Left colon (tissue), 2 donors: ENCODE measurements at regions of chr1 and their contacts with region 1.

Region 1: GRCh38 chr1:117758444-117759316 is 152.8 kb downstream of the TENT5C start:
- DNase-seq: peak; percentile 68 to 77
- ATAC-seq: peak; percentile 91

Region 2: DNA sequence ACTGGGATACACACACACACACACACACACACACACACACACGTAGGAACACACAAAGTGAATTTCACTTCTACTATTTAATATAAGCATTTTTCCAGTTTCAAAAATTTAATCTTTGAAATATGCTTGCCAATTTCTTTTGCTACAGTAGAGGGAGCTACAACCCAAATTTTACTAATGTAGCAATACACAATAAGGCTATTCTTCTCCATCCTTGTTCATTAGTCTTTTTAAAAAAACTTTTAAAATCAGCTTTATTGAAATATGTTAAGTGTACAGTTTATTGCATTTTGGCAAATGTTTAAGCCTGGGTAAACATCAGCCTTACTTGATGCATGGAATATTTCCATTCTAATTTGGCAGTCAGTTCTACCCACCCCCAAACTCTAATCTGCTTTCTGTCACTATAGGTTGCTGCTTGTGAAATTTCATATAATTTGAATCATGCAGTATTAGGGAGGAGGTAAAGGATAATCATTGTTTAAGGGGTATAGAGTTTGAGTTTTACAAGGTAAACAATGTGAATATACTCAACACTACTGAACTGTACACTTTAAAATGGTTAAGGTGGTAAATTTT is 245.8 kb before region 1 on chr1:
- intact Hi-C with region 1: loop called in 1 of 2 experiments (anchors 5 kb)
- DNase-seq: no peak
- ATAC-seq: peak; percentile 54

Region 3: GRCh38 chr1:117534995-117535467 is 223.6 kb before region 1 on chr1:
- intact Hi-C with region 1: loop called (anchors 5 to 10 kb)
- DNase-seq: peak in 1 of 2 donors; percentile 23
- ATAC-seq: peak; percentile 79

Region 4: DNA sequence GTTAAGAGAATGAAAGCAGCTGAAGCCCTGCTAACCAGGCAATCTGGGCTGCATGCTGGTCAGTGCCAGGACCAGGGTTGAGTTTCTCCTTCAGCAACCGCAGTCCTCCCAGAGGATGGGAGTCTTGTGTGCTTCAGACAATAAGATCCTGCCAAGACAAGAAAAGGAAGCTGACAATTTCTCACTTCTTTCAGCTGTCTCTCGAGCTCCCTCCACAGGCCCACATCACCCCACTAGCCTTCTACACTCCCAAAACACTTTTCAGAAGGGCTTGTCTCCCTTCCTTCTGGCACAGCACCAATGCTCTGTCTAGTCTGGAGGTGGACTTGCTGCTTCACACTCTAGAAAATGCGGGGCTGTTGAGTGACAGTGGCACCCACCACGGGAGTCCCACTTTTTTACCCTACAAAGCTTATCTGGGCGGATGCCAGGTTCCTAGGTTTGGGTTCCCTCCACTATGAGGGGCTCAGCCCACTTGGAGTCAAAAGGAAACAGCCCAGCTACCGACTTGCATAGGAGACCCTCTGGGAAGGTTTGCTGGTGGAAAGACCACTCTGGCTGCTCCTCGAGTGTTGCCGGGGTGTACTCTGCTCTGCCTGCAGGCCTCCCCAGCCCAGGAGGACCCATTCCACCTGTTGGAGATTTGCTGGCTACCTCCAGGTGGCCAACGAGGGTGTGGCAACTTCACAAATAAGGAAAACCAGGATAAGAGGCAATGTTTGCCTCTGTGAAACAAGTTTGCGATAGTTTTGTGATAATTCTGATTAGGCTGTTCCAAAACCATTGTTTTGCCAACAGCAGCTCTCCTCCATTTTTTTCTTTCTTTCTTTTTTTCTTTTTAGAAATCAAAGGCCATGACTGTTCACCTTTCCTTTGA is 83.9 kb before region 1 on chr1:
- intact Hi-C with region 1: no loop called
- DNase-seq: peak in 1 of 2 donors; percentile 64
- ATAC-seq: peak; percentile 48

Region 5: GRCh38 chr1:117695796-117696490 is 62.7 kb before region 1 on chr1:
- intact Hi-C with region 1: no loop called
- DNase-seq: no peak
- ATAC-seq: no peak

Region 6: GRCh38 chr1:117929173-117929989 is 170.7 kb after region 1 on chr1 and contains the starts of genes GDAP2 and WDR3:
- intact Hi-C with region 1: no loop called
- DNase-seq: peak; percentile 98
- ATAC-seq: peak; percentile 95
- total RNA-seq, gene GDAP2: 31.0 to 33.3 TPM
- total RNA-seq, gene WDR3: 11.8 to 14.5 TPM